ENCODE measurements at regions of chr16 and their contacts with region 1.

Region 1: GRCh38 chr16:30957456-30958174 is at the start of gene SETD1A:
- DNase-seq: peak; percentile 93 to 99 (median 96)
- H3K4me3 ChIP-seq: peak within 1 kb of the TSS; percentile 58 to 96 (median 84)
- H3K27ac ChIP-seq: peak within 1 kb of the TSS; percentile 77 to 99 (median 98)
- H3K27me3 ChIP-seq: no peaks in the 10 kb centered on the region
- CTCF ChIP-seq: peak in 18 of 56 donors; percentile 1 to 49 (median 12)
- total RNA-seq, gene SETD1A: 13.3 to 28.5 (median 17.9) TPM

Region 2: DNA sequence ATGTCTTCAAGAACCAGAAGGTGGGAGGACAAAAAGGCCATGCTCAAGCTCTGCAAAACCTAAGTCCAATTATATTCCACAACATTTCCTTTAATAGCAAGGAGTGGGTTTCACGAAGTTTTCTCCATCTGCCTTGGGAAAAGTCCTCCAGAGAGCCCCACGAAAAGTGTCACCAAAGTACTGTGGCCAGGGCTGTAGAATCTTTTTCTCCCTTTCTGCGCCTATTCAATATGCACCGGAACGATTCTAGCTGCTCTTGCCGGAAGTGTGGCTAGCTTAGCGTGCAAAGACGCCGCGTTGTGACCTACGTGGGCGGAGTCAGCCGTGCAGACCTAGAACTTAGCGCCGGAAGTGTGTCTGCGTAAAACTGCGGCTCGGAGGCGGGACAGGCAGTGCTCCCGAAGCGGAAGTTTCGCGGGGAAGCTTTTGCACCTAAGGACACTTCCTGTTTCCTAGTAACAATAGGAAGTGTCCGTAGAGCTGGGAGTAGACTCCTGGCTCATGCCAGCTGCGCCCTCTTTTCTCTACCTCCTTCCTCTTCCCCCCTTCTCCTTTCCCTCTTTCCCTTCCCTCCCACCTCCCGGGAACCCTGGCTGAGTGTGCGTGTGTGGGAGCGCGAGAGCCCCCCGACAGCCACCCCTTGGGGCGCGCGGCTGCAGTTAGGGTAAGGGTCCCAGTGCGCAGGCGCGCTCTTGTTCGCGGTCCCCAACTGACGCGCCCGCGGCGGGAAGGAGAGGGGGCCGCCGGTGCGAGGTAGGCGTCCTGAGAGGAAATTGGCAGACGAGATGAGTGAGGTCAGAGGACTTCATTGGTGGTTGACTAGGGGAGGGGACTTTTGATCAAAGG is 116.6 kb after region 1 on chr16 and contains the starts of genes ZNF646 and ZNF668:
- intact Hi-C with region 1: loop called in 1 of 2 experiments (anchors 5 kb)
- DNase-seq: peak; percentile 98 to 100 (median 99)
- H3K4me3 ChIP-seq: peak within 1 kb of the TSS; percentile 74 to 99 (median 95)
- H3K27ac ChIP-seq: peak within 1 kb of the TSS; percentile 78 to 98 (median 95)
- H3K27me3 ChIP-seq: no peaks in the 10 kb centered on the region
- CTCF ChIP-seq: peak in 27 of 56 donors; percentile 5 to 44 (median 20)
- total RNA-seq, gene ZNF646: 11.2 to 24.3 (median 16.7) TPM
- total RNA-seq, gene ZNF668: 7.9 to 24.5 (median 12.5) TPM

Region 3: DNA sequence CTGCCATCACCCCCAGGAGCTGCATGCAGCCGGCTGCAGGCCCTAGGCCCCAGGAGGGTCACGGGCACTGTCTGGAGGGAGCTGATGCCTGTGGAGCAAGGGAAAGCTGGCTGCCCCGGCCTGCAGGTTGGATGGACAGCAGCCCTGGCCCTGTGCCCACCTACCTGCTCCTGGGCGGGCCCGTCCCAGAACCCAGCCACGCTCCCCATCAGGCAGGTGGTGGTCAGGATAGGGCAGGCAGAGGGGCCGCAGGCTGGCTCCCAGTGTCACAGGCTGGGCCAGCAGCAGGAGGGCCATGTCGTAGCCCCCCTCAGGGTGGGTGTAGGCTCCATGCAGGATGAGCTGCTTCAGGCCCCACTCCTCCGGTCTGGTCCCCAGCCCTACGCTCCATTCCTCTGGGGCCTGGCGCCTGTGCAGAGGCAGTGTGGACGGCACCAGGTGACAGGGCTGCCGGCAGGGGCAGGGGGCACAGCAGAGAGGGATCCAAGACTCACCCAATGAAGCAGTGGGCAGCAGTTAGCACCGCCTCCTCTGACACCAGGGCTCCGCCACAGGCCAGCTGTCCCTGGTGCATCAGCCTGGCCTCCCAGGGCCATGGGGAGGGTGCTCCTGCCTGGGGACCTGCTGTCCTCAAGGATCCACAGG is 127.1 kb after region 1 on chr16:
- intact Hi-C with region 1: loop called in 1 of 2 experiments (anchors 10 kb)
- DNase-seq: no peak
- H3K4me3 ChIP-seq: no peak overlapping the region
- H3K27ac ChIP-seq: peak overlapping the region in 2 of 59 donors; percentile 21 to 41
- H3K27me3 ChIP-seq: no peaks in the 10 kb centered on the region
- CTCF ChIP-seq: no peak

Region 4: DNA sequence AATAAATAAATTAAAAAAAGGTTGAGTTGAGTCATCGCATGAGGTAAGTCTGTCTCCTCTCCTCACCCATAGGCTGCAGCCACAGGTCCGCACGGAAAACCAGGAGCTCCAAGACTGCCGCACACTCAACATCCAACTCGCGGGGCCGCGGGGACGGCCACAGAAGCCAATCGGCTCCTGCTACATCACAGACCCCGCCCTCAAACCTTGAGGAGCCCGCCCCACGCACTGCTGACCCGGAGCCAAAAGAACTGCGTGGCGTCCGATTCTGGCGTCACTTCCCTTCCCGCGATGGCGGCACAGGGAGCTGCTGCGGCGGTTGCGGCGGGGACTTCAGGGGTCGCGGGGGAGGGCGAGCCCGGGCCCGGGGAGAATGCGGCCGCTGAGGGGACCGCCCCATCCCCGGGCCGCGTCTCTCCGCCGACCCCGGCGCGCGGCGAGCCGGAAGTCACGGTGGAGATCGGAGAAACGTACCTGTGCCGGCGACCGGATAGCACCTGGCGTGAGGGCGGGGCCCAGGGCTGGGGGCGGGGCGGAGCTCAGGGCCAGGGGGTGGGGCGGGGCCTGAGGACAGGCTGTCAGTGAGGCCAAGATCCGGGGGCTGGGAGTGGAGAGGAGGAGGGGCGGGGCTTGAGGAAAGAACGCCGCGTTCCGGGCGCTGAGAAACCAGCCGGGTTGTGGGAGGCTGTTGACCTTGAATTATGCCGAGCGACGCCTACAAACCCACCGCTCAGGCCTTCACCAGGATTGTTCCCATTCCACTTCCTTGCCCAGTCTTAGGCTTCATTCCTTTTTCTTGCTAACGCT is 160.0 kb after region 1 on chr16 and contains the start of gene KAT8:
- intact Hi-C with region 1: loop called in 1 of 2 experiments (anchors 10 kb)
- DNase-seq: peak; percentile 98 to 99 (median 99)
- H3K4me3 ChIP-seq: peak within 1 kb of the TSS; percentile 31 to 92 (median 78)
- H3K27ac ChIP-seq: peak within 1 kb of the TSS; percentile 59 to 97 (median 92)
- H3K27me3 ChIP-seq: no peaks in the 10 kb centered on the region
- CTCF ChIP-seq: peak in 6 of 56 donors; percentile 5 to 40 (median 16)
- total RNA-seq, gene KAT8: 58.1 to 99.4 (median 78.1) TPM

Region 5: GRCh38 chr16:31868691-31869167 is 911.1 kb after region 1 on chr16:
- intact Hi-C with region 1: loop called (anchors 10 kb)
- DNase-seq: peak; percentile 60 to 89 (median 79)
- H3K4me3 ChIP-seq: peak overlapping the region in 27 of 59 donors; percentile 1 to 35 (median 18)
- H3K27ac ChIP-seq: peak overlapping the region in 18 of 59 donors; percentile 1 to 71 (median 46)
- H3K27me3 ChIP-seq: no peaks in the 10 kb centered on the region
- CTCF ChIP-seq: peak; percentile 79 to 97 (median 91)

Region 6: DNA sequence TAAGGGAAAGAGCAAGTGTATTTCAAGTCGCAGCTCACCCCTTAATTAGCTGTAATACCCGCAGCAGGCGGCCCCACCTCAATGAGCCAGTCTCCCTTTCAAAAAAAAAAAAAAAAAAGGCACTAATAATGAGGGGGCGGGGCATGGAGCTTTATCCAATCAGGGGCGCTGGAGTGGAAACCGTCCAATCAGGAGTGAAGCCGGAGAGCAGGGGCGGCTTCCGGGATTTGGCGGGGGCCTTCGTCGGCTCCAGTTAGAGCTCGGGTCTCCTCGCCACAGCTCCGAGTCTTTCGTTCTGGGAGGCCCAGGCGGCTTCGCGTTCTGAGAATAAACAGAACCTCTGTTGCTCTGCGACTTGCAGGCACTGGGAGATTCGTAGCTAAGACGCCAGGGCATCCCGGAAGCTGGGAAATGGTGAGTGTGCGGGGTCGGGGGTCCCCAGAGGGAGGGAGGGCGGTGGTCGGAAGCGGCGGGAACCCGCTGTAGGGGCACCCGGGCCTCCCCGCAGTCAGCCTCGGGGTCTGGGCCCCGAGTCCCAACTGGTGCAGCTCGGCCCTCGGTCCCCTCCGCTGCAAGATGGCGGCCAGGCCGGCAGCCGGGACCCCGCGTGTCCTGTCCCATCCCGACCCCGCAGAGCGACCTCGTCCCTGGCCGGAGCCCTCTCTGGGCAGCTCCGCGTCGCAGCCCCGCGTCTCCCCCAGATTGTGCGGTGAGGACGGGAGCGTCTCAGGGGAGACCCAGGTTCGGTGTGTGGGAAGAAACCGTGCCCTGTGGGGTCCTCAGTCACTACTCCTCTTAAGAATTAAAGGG is 916.1 kb after region 1 on chr16 and contains the start of gene ZNF267:
- intact Hi-C with region 1: loop called (anchors 10 kb)
- DNase-seq: peak; percentile 80 to 95 (median 93)
- H3K4me3 ChIP-seq: peak within 1 kb of the TSS; percentile 77 to 100 (median 98)
- H3K27ac ChIP-seq: peak within 1 kb of the TSS in 57 of 59 donors; percentile 34 to 94 (median 84)
- H3K27me3 ChIP-seq: no peaks in the 10 kb centered on the region
- CTCF ChIP-seq: peak in 8 of 56 donors; percentile 2 to 36 (median 27)
- total RNA-seq, gene ZNF267: 6.4 to 23.6 (median 11.4) TPM

Measured in dorsolateral prefrontal cortex (tissue), 120 donors.